MCF 10A (cell line): ENCODE measurements at regions of chr15 and their contacts with region 1.

Region 1: DNA sequence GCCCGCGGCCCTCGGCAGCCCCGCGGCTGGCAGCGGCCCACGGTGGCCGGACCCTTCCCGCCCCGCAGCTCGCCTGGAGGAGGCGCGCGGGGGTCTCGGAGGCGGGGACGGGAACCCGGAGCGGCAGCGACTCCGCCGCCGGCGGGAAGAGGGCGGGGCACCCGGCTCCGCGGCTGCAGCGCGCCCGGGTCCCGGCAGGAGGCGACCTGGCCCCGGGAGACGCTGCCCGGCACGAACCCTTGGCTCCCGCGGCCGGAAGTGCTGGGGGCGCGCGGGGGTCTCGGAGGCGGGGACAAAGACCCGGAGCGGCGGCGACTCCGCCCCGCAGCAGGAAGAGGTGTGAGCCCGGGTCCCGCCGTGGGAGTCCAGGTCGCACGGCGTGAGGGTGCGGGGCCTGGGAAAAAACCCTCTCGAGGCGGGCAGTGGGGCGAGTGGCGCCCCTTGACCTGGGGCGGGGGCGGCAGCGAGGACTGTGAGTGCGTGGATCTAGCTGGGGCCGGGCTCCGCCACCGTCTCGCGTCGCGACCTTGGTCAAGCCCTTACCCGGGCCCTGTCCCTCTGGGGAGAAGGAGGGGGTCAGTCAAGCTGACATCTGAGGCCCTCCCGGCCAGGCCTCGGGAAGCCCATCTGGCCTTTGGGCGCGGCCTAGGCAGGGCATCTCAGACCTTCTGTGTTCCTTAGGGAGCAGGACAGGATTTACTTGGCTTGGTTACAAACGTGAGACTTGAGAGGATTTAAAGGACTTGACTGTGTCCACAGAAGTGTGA is at the start of gene CIB2:
- DNase-seq: peak; percentile 41
- H3K4me3 Mint-ChIP-seq: peak within 1 kb of the TSS; percentile 72
- H3K27ac Mint-ChIP-seq: peak within 1 kb of the TSS; percentile 59
- H3K4me1 Mint-ChIP-seq: peaks cover 5% of the 10 kb centered on the region
- H3K27me3 Mint-ChIP-seq: no peaks in the 10 kb centered on the region
- CTCF ChIP-seq: peak; percentile 80
- total RNA-seq, gene CIB2: 0.30 and 0.34 TPM in 2 replicates

Region 2: GRCh38 chr15:78149068-78149804 is 17.8 kb after region 1 on chr15 and contains the start of gene IDH3A:
- CTCF ChIA-PET with region 1: interaction called, 10 read pairs
- POLR2A ChIA-PET with region 1: interaction called, 22 read pairs
- intact Hi-C with region 1: loop called (anchors 2 kb)
- DNase-seq: peak; percentile 97
- H3K4me3 Mint-ChIP-seq: peak within 1 kb of the TSS; percentile 92
- H3K27ac Mint-ChIP-seq: peak within 1 kb of the TSS; percentile 90
- H3K4me1 Mint-ChIP-seq: peaks cover 35% of the 10 kb centered on the region
- H3K27me3 Mint-ChIP-seq: no peaks in the 10 kb centered on the region
- CTCF ChIP-seq: no peak
- total RNA-seq, gene IDH3A: 100.0 and 106 TPM in 2 replicates

Region 3: DNA sequence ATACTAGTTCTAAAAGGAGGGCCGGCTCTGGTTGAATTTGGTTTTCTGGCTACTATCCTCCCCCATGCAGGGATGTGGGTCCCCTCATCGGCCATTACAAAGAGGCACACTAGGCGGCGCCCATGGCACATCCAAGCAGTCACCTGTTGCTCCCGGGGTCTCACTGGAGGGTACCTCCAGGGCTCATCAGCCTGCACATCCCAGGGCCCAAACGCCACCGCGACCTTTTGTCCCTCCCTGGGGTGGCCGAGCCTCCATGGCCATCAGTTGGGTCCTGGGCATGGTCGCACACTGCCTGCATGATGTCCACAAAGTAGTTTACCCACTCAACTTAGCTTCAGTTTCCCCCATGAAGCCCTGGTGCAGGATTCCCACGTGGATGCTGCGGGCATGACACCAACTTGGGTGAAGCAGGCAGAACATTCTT is 46.0 kb after region 1 on chr15:
- CTCF ChIA-PET with region 1: interaction called, 4 read pairs
- POLR2A ChIA-PET with region 1: interaction called, 3 read pairs
- intact Hi-C with region 1: loop called (anchors 5 kb)
- DNase-seq: peak; percentile 52
- H3K4me3 Mint-ChIP-seq: no peak overlapping the region
- H3K27ac Mint-ChIP-seq: no peak overlapping the region
- H3K4me1 Mint-ChIP-seq: no peaks in the 10 kb centered on the region
- H3K27me3 Mint-ChIP-seq: no peaks in the 10 kb centered on the region
- CTCF ChIP-seq: peak; percentile 73